ENCODE measurements at regions of chr6 and their contacts with region 1.

Region 1: GRCh38 chr6:53718597-53719460 is 53.3 kb upstream of the KLHL31 start:
- DNase-seq: peak; percentile 38
- H3K4me3 Mint-ChIP-seq: no peak overlapping the region
- H3K27ac Mint-ChIP-seq: no peak overlapping the region
- H3K4me1 Mint-ChIP-seq: peaks cover 6% of the 10 kb centered on the region
- H3K27me3 Mint-ChIP-seq: peaks cover 28% of the 10 kb centered on the region

Region 2: GRCh38 chr6:53701333-53702218 is 17.3 kb before region 1 on chr6:
- CTCF ChIA-PET with region 1: interaction called, 18 read pairs
- POLR2A ChIA-PET with region 1: no interaction called
- DNase-seq: peak; percentile 21
- H3K4me3 Mint-ChIP-seq: no peak overlapping the region
- H3K27ac Mint-ChIP-seq: peak overlapping the region; percentile 2
- H3K4me1 Mint-ChIP-seq: peaks cover 10% of the 10 kb centered on the region
- H3K27me3 Mint-ChIP-seq: peaks cover 4% of the 10 kb centered on the region

Region 3: GRCh38 chr6:53707108-53707897 is 11.5 kb before region 1 on chr6:
- CTCF ChIA-PET with region 1: interaction called, 18 read pairs
- POLR2A ChIA-PET with region 1: no interaction called
- DNase-seq: no peak
- H3K4me3 Mint-ChIP-seq: no peak overlapping the region
- H3K27ac Mint-ChIP-seq: no peak overlapping the region
- H3K4me1 Mint-ChIP-seq: no peaks in the 10 kb centered on the region
- H3K27me3 Mint-ChIP-seq: peaks cover 14% of the 10 kb centered on the region

Region 4: DNA sequence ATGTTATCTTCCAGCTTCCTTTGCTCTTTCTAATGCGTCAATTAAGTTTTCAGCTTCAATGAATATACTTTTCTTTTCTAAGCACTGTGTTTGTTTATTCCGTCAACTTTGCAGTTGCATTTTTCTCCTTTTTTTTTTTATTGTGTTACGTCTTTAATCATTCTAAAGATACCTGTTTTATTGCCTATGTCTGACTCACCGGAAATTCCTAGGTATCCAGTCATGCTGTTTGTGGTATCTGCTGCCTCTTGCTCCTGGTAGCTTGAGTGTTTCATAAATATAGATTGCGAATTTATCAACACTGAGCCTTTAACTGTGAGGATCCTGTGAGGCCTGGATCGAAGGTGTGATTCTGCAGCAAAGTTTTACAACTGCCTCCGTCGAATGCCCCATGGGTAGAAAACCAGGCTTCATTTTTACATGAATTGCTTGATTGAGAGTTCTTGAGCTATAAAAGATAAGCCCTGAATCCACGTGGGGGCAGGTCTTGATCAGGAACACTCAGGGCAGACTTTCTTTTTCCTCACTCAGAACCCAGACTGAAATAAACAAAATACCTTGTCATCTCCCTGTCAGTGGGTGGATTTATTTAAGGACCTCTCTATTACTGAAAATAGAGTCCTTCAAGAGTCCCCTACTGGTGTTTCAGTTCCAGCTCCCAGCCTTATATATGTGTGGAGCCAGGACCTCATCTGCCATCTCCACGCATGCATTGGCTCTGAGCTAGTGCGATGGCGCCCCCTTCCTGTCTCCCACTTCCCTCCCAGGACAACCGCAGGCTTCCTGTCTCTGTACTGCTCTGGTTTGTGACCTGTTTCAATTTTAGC is 15.9 kb after region 1 on chr6:
- CTCF ChIA-PET with region 1: interaction called, 59 read pairs
- POLR2A ChIA-PET with region 1: interaction called, 4 read pairs
- DNase-seq: peak; percentile 46
- H3K4me3 Mint-ChIP-seq: no peak overlapping the region
- H3K27ac Mint-ChIP-seq: no peak overlapping the region
- H3K4me1 Mint-ChIP-seq: peaks cover 40% of the 10 kb centered on the region
- H3K27me3 Mint-ChIP-seq: peaks cover 2% of the 10 kb centered on the region

Region 5: DNA sequence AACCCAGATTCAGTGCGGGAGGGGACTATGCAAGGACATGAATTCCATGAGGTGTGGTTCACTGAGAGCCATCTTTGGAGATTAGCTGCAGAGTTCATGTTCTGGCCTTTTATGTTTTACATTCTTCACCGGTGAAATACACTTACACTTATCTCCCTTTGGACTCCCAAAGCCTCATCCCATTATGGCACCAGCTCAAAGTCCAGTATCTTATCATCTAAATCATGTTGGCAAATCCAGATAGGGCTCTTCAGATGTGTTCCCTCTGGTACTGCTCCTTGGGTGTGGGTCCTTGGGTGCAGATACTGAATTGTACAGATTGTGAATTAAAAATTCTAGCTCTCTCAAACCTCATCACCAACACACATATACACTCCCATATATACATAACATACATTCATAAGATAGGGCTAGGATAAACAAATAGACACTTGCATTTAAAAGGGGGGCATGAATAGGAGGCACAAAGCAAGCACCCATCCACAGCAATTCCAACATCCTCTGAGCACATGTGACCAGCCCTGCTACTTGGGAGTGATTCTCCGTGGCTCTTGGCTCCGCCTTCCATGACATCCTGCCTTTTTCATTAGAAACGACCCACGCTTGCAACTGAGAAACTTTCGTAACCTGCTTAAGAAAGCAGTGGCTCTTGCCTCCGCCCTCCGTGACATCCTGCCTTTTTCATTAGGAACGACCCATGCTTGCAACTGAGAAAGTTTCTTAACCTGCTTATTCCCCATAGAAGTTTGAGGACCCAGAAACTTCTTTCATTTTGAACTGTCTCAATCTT is 22.4 kb after region 1 on chr6:
- CTCF ChIA-PET with region 1: interaction called, 57 read pairs
- POLR2A ChIA-PET with region 1: no interaction called
- DNase-seq: peak; percentile 49
- H3K4me3 Mint-ChIP-seq: peak overlapping the region; percentile 30
- H3K27ac Mint-ChIP-seq: peak overlapping the region; percentile 38
- H3K4me1 Mint-ChIP-seq: peaks cover 15% of the 10 kb centered on the region
- H3K27me3 Mint-ChIP-seq: peaks cover 2% of the 10 kb centered on the region

Region 6: DNA sequence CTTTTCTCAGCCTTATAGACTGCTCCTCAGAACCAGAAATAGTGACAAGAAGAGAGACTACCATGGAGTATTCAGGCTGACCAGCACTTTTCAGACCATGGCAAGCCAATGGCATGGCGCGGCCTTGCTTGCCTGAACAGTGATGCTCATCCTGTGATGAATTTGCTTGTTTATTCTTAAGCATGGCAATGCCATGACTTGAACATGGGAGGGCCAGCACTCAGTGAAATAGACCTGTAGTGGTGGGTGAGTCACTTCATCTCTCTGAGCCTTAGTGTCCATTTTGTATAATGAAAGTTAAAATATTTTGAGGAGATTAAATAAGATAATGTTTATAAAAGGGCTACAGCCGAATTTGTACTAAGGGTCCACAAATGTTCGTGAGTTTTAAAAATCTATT is 155.1 kb after region 1 on chr6:
- CTCF ChIA-PET with region 1: no interaction called
- POLR2A ChIA-PET with region 1: no interaction called
- DNase-seq: no peak
- H3K4me3 Mint-ChIP-seq: no peak overlapping the region
- H3K27ac Mint-ChIP-seq: no peak overlapping the region
- H3K4me1 Mint-ChIP-seq: no peaks in the 10 kb centered on the region
- H3K27me3 Mint-ChIP-seq: no peaks in the 10 kb centered on the region

Region 7: DNA sequence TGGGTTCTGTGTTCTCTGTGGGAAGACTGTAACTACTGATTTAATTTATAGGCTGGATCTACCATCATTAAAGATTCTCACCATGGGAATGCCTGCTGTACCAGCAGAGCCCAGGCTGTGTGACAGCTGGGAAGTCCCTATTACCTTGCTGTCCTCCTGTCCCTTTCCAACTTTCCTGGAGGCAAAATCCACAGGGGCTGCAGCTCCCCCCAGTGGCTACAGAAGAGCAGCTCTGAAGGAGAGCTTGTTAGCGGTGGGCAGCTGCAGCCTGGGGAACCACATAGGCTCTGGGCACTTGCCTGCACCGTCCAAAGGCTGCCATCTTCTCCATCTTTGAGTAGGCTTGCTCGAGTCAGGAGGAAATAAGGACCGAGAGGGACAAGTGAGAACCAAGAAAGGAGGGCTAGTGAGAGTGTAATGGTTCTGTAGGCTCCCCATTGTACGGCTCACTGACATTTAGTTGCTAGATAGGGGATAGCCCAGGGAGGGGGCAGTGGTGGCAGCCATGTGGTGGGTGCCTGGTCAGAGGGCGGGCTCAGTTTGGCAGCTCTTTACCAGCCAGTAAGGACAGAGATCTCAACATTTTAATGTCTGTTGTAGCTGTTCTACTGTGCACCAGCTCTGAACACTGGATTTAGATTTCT is 237.4 kb after region 1 on chr6:
- CTCF ChIA-PET with region 1: interaction called, 20 read pairs
- POLR2A ChIA-PET with region 1: interaction called, 3 read pairs
- DNase-seq: peak; percentile 18
- H3K4me3 Mint-ChIP-seq: no peak overlapping the region
- H3K27ac Mint-ChIP-seq: no peak overlapping the region
- H3K4me1 Mint-ChIP-seq: no peaks in the 10 kb centered on the region
- H3K27me3 Mint-ChIP-seq: peaks cover 12% of the 10 kb centered on the region

Measured in activated CD4-positive, alpha-beta memory T cell treated with anti-CD3 and anti-CD28 coated beads, Interleukin-2, amount 10 ng/mL, durations not matched to agents 7 days and 5 days (primary cell).